ENCODE measurements at regions of chr20 and their contacts with region 1.

Region 1: GRCh38 chr20:44388466-44389023 is 33.0 kb downstream of the HNF4A start:
- DNase-seq: peak; percentile 91
- ATAC-seq: peak; percentile 93
- H3K4me3 Mint-ChIP-seq: no peak overlapping the region
- H3K27ac Mint-ChIP-seq: no peak overlapping the region
- H3K4me1 Mint-ChIP-seq: peaks cover 9% of the 10 kb centered on the region
- H3K27me3 Mint-ChIP-seq: peaks cover 6% of the 10 kb centered on the region

Region 2: DNA sequence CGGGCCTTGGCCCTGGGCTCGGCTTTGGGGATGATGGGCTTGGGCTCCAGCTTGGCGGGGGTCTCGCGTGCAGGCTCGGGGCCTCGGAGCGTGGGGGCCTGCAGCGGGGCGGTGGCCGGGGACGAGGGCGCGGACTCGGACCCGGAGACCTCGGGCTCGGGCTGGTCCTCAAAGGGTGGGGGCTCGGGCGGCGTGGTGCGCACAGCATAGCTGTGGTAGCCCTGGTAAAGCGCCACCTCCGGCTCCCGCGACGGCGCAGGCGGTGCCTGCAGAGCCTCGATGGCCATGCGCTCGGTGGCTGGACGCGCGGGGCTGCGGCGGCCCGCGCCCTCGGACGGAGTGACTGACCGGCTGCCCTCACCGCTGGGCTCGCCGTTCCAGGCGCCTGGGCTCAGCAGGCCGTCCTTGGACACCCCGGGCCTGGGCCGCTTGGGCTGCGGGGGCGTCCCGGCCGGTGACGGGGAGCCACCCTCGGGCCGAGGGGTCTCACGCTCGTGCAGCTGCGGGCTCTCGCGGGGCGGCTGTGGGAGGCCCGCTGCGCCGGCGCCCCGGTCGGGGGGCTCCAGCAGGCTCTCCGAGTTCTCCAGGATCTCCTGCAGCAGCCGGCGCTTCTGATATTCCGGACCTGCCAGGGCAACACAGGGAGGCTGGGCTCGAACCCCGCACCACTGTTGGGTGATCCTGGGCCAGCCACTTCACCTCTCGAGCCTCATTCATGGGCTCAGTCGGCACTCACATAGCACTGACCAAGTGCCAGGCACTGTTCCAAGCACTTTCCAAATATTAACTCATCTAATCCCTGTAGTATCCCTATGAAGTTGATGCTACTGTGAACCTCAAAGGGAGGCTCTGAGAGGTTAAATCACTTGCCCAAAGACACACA is 272.5 kb before region 1 on chr20:
- CTCF ChIA-PET with region 1: no interaction called
- POLR2A ChIA-PET with region 1: no interaction called
- intact Hi-C with region 1: loop called in 1 of 2 experiments (anchors 5 kb)
- DNase-seq: no peak
- ATAC-seq: no peak
- H3K4me3 Mint-ChIP-seq: no peak overlapping the region
- H3K27ac Mint-ChIP-seq: no peak overlapping the region
- H3K4me1 Mint-ChIP-seq: peaks cover 5% of the 10 kb centered on the region
- H3K27me3 Mint-ChIP-seq: peaks cover 23% of the 10 kb centered on the region

Region 3: DNA sequence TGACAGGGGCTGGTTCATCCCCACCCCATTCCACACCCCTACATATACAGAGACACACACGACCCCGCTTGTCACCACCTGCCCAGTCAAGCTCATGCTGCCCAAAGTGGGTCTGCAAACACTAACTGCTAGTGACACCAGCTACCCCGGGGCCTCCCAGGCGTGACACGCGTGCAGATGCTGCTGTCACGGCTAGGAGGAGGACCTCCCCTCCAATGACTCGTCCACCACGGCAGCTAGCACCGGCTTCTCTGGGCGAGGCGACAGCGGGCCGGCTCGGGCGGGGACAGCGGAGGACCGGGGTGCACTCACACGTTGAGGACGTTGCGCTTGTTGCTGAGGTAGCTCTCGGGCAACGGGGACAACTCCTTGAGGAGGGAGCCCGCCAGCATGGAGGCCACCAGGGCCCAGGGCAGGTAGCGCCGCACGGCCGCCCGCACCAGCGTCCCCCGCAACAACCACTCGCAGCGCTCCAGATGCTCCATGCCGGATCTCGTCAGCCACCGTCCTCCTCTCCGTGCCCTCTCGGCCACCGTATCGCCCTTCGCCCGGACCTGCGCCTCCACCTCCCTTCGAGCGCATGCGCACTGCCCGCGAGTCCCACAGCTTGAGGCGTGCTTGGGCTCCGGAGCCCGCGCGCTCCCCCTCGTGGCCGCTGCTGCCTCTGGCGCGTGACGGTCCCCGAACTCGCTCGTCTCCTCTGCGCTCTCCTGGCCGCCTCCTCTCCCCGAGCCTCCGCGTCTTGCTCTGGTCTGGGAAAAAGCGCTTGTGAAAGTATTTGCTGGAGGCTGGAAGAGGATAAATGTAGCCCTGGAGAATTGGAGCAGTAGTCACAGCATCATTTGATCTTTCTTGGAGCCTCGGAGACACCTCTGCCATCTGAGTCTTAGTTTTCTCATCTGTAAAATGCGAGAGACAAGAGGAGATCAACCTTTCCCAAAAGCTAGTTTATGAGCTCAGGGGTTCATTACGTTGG is 77.6 kb before region 1 on chr20 and contains the start of gene FITM2:
- CTCF ChIA-PET with region 1: interaction called, 4 read pairs
- POLR2A ChIA-PET with region 1: no interaction called
- intact Hi-C with region 1: loop called (anchors 2 to 5 kb)
- DNase-seq: peak; percentile 99
- ATAC-seq: peak; percentile 96
- H3K4me3 Mint-ChIP-seq: peak within 1 kb of the TSS; percentile 86
- H3K27ac Mint-ChIP-seq: peak within 1 kb of the TSS; percentile 66
- H3K4me1 Mint-ChIP-seq: peaks cover 17% of the 10 kb centered on the region
- H3K27me3 Mint-ChIP-seq: no peaks in the 10 kb centered on the region
- total RNA-seq, gene FITM2: 2.1 to 2.2 TPM

Region 4: GRCh38 chr20:44475694-44476560 is 87.4 kb after region 1 on chr20 and contains the start of gene TTPAL:
- CTCF ChIA-PET with region 1: interaction called, 6 read pairs
- POLR2A ChIA-PET with region 1: no interaction called
- intact Hi-C with region 1: loop called in 1 of 2 experiments (anchors 1 kb)
- DNase-seq: peak; percentile 96
- ATAC-seq: peak; percentile 97
- H3K4me3 Mint-ChIP-seq: peak within 1 kb of the TSS; percentile 91
- H3K27ac Mint-ChIP-seq: peak within 1 kb of the TSS; percentile 97
- H3K4me1 Mint-ChIP-seq: peaks cover 22% of the 10 kb centered on the region
- H3K27me3 Mint-ChIP-seq: no peaks in the 10 kb centered on the region
- total RNA-seq, gene TTPAL: 18.3 to 21.5 TPM

Region 5: GRCh38 chr20:44609511-44610312 is 221.2 kb after region 1 on chr20:
- CTCF ChIA-PET with region 1: interaction called, 9 read pairs
- POLR2A ChIA-PET with region 1: no interaction called
- intact Hi-C with region 1: loop called (anchors 1 kb)
- DNase-seq: peak; percentile 91
- ATAC-seq: peak; percentile 96
- H3K4me3 Mint-ChIP-seq: peak overlapping the region; percentile 24
- H3K27ac Mint-ChIP-seq: peak overlapping the region; percentile 84
- H3K4me1 Mint-ChIP-seq: peaks cover 18% of the 10 kb centered on the region
- H3K27me3 Mint-ChIP-seq: no peaks in the 10 kb centered on the region

Region 6: DNA sequence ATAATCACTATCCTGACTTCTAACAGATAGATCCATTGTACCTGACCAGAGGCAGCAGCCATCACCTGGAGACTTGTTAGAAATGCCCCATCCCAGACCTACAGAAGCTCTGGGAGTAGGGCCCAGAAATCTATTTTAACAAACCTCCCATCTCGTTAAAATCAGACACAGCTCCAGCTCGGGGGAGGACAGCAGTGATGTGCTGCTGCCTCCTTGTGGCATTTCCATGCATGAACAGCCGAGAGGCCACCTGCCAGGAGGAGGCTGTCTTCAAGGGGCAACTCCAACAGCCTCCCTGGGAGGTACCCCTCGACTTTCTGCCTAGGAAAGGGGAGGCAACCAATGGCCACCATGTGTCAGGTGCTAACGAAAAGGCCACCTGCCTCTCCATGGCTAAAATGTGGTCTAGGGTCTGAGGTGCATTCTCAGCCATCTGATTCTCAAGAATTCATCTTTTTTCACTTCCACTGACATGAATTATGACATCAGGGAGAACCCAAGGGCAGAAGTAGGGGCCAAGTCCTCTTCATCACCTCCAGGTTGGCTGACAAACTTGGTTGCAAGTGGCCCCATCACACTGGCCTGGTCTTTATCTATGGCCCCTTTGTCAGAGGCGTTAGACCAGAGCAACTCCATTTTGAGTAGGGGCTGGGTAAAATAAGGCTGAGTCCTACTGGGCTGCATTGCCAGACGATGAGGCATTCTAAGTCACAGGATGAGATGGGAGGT is 345.0 kb after region 1 on chr20:
- CTCF ChIA-PET with region 1: interaction called, 8 read pairs
- POLR2A ChIA-PET with region 1: no interaction called
- intact Hi-C with region 1: loop called in 1 of 2 experiments (anchors 1 kb)
- DNase-seq: peak; percentile 82
- ATAC-seq: peak; percentile 64
- H3K4me3 Mint-ChIP-seq: no peak overlapping the region
- H3K27ac Mint-ChIP-seq: no peak overlapping the region
- H3K4me1 Mint-ChIP-seq: peaks cover 26% of the 10 kb centered on the region
- H3K27me3 Mint-ChIP-seq: no peaks in the 10 kb centered on the region

Measured in activated CD4-positive, alpha-beta T cell treated with anti-CD3 and anti-CD28 coated beads for 36 hours (primary cell).